Left cardiac atrium (tissue), 4 donors: ENCODE measurements at regions of chr12 and their contacts with region 1.

Region 1: GRCh38 chr12:9118158-9118557 is 2.4 kb upstream of the A2M start:
- DNase-seq: no peak
- ATAC-seq: peak; percentile 40 to 81

Region 2: DNA sequence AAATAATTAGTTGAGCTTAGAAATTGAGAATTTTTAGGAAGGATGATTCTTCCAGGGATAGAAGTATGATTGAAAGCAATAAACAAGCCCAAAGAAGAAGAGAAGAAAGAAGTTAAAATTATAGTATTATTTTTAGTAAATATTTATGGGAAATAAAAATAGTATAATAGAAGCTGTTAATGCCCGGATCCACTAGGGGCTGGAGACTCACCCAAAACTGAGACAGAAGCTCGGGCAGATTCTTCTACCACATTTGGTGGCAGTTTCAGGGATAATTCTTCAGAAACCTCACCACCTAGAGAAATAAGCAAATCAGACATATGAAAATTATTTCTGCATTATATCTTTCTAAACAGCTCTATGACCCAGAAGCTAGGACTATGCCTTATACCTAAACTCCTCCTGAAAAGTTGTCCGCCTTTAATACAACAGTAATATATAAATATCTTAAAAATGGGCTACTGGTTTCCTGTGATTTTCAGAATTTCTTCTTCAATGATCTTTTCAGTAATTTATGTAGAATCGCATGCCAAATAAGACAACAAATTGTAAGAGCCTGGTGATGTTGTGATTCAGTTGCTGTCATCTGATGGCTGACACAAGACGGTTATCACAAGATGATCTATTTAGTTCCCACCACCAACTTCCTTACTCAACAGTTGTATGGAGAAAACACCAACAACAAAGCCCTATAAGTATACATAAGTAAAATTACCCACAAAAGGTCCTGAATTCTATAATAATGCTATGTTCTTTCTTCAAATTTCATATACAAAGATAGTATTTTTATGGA is 38.1 kb before region 1 on chr12:
- intact Hi-C with region 1: loop called in 1 of 2 experiments (anchors 5 kb)
- DNase-seq: no peak
- ATAC-seq: no peak

Region 3: GRCh38 chr12:9221483-9221882 is 103.3 kb after region 1 on chr12:
- intact Hi-C with region 1: no loop called
- DNase-seq: no peak
- ATAC-seq: no peak

Region 4: GRCh38 chr12:9276990-9277389 is 158.8 kb after region 1 on chr12:
- intact Hi-C with region 1: loop called (anchors 5 kb)
- DNase-seq: no peak
- ATAC-seq: no peak